Right lobe of liver (tissue), 6 donors: ENCODE measurements at regions of chr19 and their contacts with region 1.

Region 1: DNA sequence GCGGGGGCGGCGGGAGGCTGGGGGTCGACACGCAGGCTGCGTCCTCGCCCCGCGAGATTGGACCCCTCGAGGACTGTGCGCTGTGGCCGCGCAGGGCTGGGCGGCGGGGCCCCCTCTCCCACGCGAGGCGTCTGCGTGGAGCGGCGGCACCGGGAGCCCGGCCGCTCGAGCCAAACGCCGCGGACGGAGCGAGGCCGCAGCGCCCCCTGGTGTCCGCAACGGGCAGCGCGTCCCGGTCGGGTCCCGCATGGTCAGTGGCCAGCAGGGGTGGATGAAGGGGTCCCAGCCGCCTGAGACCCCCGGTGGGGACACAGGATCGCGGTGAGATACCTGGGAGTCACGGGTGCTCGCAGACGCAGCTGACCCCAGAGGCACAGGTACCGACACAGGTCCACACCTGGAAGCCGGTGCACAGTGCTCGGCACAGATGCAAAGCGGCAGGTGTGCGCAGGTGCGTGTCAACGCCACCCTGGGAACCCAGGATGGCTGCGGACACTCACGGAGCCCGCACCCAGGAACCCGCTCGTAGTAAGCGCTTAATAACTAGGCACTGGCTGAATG is 2.1 kb upstream of the CIRBP start:
- DNase-seq: peak; percentile 80 to 84 (median 80)
- ATAC-seq: peak; percentile 5 to 48 (median 22)
- H3K4me3 ChIP-seq: peak overlapping the region; percentile 50 to 61 (median 50)
- H3K27ac ChIP-seq: peak overlapping the region; percentile 36 to 68 (median 47)
- H3K4me1 ChIP-seq: peaks cover 0 to 52% (median 23%) of the 10 kb centered on the region in 4 donors
- H3K27me3 ChIP-seq: no peaks in the 10 kb centered on the region
- CTCF ChIP-seq: peak; percentile 97 to 99 (median 98)
- POLR2A ChIP-seq: no peak

Region 2: GRCh38 chr19:1243761-1244692 is 23.0 kb before region 1 on chr19:
- intact Hi-C with region 1: loop called in 1 of 2 experiments (anchors 1 kb)
- DNase-seq: peak; percentile 90 to 94 (median 94)
- ATAC-seq: peak; percentile 48 to 58 (median 52)
- H3K4me3 ChIP-seq: peak overlapping the region; percentile 8 to 40 (median 21)
- H3K27ac ChIP-seq: peak overlapping the region; percentile 59 to 92 (median 66)
- H3K4me1 ChIP-seq: peaks cover 0 to 73% (median 30%) of the 10 kb centered on the region in 4 donors
- H3K27me3 ChIP-seq: no peaks in the 10 kb centered on the region
- CTCF ChIP-seq: peak; percentile 98 to 99 (median 98)
- POLR2A ChIP-seq: no peak